ENCODE measurements at regions of chr5 and their contacts with region 1.

Region 1: GRCh38 chr5:10695055-10695649 is 65.9 kb downstream of the DAP start:
- DNase-seq: peak; percentile 67 to 96 (median 78)

Region 2: GRCh38 chr5:10724799-10725507 is 29.8 kb after region 1 on chr5:
- intact Hi-C with region 1: no loop called
- DNase-seq: peak in 1 of 10 donors; percentile 85

Region 3: GRCh38 chr5:11182441-11183268 is 487.5 kb after region 1 on chr5:
- intact Hi-C with region 1: loop called (anchors 10 kb)
- DNase-seq: no peak

Region 4: GRCh38 chr5:12023614-12024241 is 1328.6 kb after region 1 on chr5:
- intact Hi-C with region 1: loop called (anchors 5 kb)
- DNase-seq: no peak

Measured in posterior cingulate gyrus (tissue), 11 donors.